Mammary epithelial cell (primary cell): ENCODE measurements at regions of chr10 and their contacts with region 1.

Region 1: DNA sequence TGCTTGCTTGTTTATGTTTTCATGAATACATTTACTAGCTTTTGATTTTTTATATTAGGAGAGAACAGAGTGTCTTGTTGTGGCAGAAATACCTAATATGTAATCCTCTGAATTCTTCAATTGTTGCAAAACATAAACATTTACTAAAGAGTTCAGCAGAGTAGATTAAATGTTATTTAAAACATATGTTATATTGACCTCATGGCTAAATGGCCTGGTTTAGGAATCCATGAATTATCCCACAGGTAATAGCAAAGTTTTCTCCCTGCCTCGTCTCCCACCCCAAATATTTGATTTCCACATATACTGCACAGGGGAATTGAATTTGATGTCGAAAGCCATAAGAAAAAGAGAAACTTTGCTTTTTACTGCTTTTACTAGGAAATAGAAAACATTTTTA is 111.8 kb downstream of the ADK start:
- DNase-seq: no peak
- H3K4me3 ChIP-seq: no peak overlapping the region
- H3K27ac ChIP-seq: no peak overlapping the region
- H3K4me1 ChIP-seq: no peaks in the 10 kb centered on the region
- H3K27me3 ChIP-seq: no peaks in the 10 kb centered on the region
- CTCF ChIP-seq: no peak

Region 2: GRCh38 chr10:74419958-74420375 is 157.1 kb after region 1 on chr10:
- CTCF ChIA-PET with region 1: no interaction called
- dilution Hi-C with region 1: no loop called
- in situ Hi-C with region 1: no loop called
- intact Hi-C with region 1: loop called (anchors 1 kb)
- DNase-seq: peak; percentile 9
- H3K4me3 ChIP-seq: no peak overlapping the region
- H3K27ac ChIP-seq: no peak overlapping the region
- H3K4me1 ChIP-seq: peaks cover 5% of the 10 kb centered on the region
- H3K27me3 ChIP-seq: no peaks in the 10 kb centered on the region
- CTCF ChIP-seq: peak; percentile 39 to 46